ENCODE measurements at regions of chr1 and their contacts with region 1.

Region 1: DNA sequence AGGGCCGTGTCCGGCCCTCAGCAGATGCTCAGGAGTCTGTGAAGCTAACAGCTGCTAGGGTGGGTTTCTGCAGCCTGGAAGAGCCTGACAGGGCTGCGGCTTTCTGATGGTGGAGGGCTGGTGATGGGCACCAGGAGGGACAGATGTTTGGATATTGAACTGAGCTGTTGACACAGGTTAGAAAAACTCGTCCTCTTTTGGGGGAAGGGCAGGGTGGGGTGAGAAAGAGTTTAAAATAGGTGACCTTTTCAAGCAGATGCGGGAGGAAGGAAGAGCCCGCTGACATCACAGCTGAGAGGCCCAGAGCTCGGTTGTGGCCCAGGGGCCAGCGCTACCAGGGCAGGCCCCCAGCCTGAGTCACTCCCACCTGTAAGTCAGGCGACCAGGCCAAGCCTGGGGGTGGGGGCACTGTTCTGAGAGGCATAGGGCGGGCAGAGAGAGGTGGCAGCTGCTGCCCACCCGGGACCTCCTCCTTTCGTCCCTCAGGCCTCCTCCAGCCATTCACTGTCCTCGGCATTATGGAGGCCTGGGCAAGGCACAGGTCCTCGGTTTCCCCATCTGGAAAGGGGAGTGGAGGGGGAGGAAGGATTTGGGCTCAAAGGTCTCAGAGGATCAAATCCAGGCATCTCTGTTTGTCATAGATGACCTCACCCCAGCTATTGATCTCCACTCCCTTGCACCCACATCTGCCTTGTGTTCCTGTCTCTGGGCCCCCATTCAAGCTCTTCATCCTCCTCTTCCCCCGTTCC is 32.3 kb upstream of the ID3 start:
- DNase-seq: peak; percentile 84
- ATAC-seq: peak; percentile 85
- H3K4me3 Mint-ChIP-seq: peak overlapping the region; percentile 32
- H3K27ac Mint-ChIP-seq: peak overlapping the region; percentile 96
- H3K4me1 Mint-ChIP-seq: peaks cover 65% of the 10 kb centered on the region
- H3K27me3 Mint-ChIP-seq: no peaks in the 10 kb centered on the region

Region 2: GRCh38 chr1:23619299-23620188 is 27.9 kb after region 1 on chr1:
- CTCF ChIA-PET with region 1: interaction called, 3 read pairs
- POLR2A ChIA-PET with region 1: no interaction called
- intact Hi-C with region 1: loop called in 1 of 2 experiments (anchors 1 kb)
- DNase-seq: peak; percentile 90
- ATAC-seq: peak; percentile 68
- H3K4me3 Mint-ChIP-seq: peak overlapping the region; percentile 60
- H3K27ac Mint-ChIP-seq: peak overlapping the region; percentile 79
- H3K4me1 Mint-ChIP-seq: peaks cover 89% of the 10 kb centered on the region
- H3K27me3 Mint-ChIP-seq: no peaks in the 10 kb centered on the region